ENCODE measurements at regions of chr1 and their contacts with region 1.

Region 1: DNA sequence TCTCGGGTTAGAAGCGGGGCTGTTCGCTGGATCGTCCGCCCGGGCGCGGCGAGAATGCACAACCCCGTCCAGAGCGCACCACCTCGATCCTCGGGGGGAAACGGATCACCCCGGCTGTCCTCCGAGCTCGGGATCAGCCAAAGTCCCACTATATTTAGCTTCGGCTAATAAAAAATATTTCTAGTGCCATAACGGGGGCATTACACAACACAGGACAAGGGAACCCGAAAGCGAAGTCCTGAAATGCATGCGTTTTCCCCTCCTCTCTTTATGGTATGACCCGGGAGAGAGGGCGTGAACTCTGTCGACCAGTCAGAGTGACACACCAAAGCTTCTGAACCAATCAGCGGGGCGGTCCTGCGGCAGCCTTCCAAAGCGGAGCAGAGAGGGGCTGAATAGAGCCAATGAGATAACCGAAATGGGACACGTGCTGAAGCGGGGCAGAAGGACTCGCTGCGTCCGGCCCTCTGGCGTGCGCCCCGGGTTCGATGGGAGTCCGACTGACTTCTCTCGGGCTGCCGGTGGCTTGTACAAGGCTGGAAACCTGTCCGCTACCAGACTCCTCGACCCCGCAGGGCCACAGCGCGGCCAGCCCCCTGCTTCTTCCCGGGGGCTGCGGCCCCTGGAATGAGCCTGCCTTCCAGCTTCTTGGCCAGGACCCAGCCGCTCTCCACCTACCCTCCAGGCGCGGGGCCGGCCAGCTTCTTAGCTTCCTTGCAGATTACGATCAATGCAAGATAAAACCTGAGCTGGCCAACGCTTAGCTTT is at the start of gene ALDH4A1:
- DNase-seq: peak; percentile 97
- H3K4me3 Mint-ChIP-seq: peak within 1 kb of the TSS; percentile 89
- H3K27ac Mint-ChIP-seq: peak within 1 kb of the TSS; percentile 95
- H3K4me1 Mint-ChIP-seq: peaks cover 19% of the 10 kb centered on the region
- H3K27me3 Mint-ChIP-seq: no peaks in the 10 kb centered on the region
- total RNA-seq, gene ALDH4A1: 7.2 to 7.3 TPM

Region 2: GRCh38 chr1:18723701-18724411 is 178.9 kb before region 1 on chr1:
- CTCF ChIA-PET with region 1: no interaction called
- POLR2A ChIA-PET with region 1: no interaction called
- intact Hi-C with region 1: no loop called
- DNase-seq: no peak
- H3K4me3 Mint-ChIP-seq: no peak overlapping the region
- H3K27ac Mint-ChIP-seq: no peak overlapping the region
- H3K4me1 Mint-ChIP-seq: no peaks in the 10 kb centered on the region
- H3K27me3 Mint-ChIP-seq: peaks cover 51% of the 10 kb centered on the region

Region 3: DNA sequence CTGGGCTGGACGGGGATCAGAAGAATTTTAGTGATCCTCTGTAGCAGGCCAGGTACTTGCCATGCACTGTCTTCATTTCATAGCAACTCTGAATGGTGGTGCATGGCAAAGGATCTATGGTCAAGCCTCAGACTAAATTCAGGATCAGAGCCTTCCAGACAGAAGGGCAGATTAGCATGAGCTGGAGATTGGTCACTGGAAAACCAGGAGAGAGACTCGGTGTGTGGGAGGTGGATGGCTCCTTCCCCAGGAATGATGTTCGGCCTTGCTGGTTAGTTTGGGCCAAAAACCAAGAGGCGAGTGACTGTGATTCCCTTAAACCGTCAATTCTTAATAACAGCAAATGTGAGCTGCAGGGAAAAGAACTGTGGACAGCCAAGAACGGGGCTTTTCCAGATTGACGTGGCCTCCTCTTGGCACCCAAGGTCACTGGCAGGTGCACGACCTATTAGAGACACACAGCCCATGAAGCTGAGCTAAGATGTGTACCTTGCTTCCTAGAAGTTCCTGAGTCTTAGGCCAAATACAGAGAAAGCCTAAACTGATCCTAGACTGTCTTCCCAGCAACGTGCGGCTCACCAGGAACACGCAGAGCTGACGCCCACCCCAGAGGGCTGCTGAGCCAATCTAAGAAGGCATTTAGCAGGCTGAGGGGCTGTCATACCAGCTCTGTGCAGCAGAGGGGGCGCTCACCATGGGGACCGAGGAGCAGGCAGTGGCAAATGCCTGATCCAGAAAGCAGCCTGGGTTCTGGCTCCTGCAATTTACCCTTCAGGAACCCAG is 18.9 kb before region 1 on chr1:
- CTCF ChIA-PET with region 1: interaction called, 22 read pairs
- POLR2A ChIA-PET with region 1: no interaction called
- intact Hi-C with region 1: no loop called
- DNase-seq: peak; percentile 78
- H3K4me3 Mint-ChIP-seq: no peak overlapping the region
- H3K27ac Mint-ChIP-seq: no peak overlapping the region
- H3K4me1 Mint-ChIP-seq: no peaks in the 10 kb centered on the region
- H3K27me3 Mint-ChIP-seq: no peaks in the 10 kb centered on the region

Region 4: GRCh38 chr1:18938008-18938706 is 35.5 kb after region 1 on chr1:
- CTCF ChIA-PET with region 1: interaction called, 17 read pairs
- POLR2A ChIA-PET with region 1: no interaction called
- intact Hi-C with region 1: no loop called
- DNase-seq: no peak
- H3K4me3 Mint-ChIP-seq: no peak overlapping the region
- H3K27ac Mint-ChIP-seq: no peak overlapping the region
- H3K4me1 Mint-ChIP-seq: peaks cover 75% of the 10 kb centered on the region
- H3K27me3 Mint-ChIP-seq: no peaks in the 10 kb centered on the region

Region 5: DNA sequence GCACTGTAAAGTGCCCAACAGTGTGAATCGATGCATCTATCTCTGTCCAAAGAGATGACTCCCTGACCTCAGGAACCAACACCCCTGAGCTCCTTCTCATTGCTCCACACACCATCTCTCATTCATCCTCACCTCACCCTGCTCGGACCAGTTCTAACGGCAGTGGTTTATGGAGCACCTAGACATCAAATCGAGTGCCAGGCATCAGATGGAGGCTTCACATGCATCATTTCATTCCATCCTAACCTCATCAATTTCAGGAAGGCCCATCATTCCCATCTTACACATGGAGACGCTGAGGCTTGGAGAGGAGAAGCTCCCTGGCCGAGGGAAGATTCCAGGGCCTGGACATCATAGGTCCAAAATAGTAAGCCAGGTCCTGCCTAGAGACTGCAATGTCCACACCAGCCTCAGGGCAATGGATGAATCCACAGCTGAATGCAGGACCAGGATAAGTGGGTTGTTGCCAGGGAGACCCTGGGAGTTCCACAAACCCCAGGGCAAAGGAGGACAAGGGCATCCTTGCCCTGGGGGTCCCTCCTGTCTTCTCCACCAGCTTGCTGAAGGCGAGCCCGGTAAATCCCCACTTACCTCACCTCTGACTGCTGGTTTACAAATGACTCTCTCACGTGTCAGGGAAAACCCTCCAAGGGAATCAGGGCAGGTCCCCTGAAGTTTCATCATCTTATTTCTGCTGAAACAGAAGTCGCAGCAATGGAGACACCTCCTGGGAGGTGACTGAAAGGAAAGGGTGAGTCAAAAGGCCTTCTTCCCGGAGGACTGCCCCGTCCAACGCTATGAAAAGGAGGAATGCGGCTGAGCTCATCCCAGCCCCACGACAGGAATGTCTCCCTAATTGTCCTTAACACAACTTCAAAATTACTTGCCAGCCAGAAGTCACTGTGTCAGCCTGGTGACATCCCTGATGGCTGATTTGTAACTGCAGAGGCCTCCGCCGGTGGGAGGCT is 62.8 kb after region 1 on chr1:
- CTCF ChIA-PET with region 1: interaction called, 10 read pairs
- POLR2A ChIA-PET with region 1: no interaction called
- intact Hi-C with region 1: no loop called
- DNase-seq: peak; percentile 78
- H3K4me3 Mint-ChIP-seq: no peak overlapping the region
- H3K27ac Mint-ChIP-seq: peak overlapping the region; percentile 70
- H3K4me1 Mint-ChIP-seq: peaks cover 14% of the 10 kb centered on the region
- H3K27me3 Mint-ChIP-seq: peaks cover 3% of the 10 kb centered on the region

Region 6: GRCh38 chr1:19074902-19075721 is 172.4 kb after region 1 on chr1:
- CTCF ChIA-PET with region 1: interaction called, 144 read pairs
- POLR2A ChIA-PET with region 1: interaction called, 3 read pairs
- intact Hi-C with region 1: loop called (anchors 5 kb)
- DNase-seq: no peak
- H3K4me3 Mint-ChIP-seq: no peak overlapping the region
- H3K27ac Mint-ChIP-seq: peak overlapping the region; percentile 81
- H3K4me1 Mint-ChIP-seq: peaks cover 55% of the 10 kb centered on the region
- H3K27me3 Mint-ChIP-seq: no peaks in the 10 kb centered on the region

Region 7: GRCh38 chr1:19113697-19114092 is 211.0 kb after region 1 on chr1:
- CTCF ChIA-PET with region 1: interaction called, 27 read pairs
- POLR2A ChIA-PET with region 1: no interaction called
- intact Hi-C with region 1: no loop called
- DNase-seq: peak; percentile 48
- H3K4me3 Mint-ChIP-seq: no peak overlapping the region
- H3K27ac Mint-ChIP-seq: no peak overlapping the region
- H3K4me1 Mint-ChIP-seq: no peaks in the 10 kb centered on the region
- H3K27me3 Mint-ChIP-seq: no peaks in the 10 kb centered on the region

Measured in activated CD4-positive, alpha-beta memory T cell treated with anti-CD3 and anti-CD28 coated beads for 36 hours (primary cell).